CD4-positive, alpha-beta memory T cell (primary cell): ENCODE measurements at regions of chr11 and their contacts with region 1.

Region 1: DNA sequence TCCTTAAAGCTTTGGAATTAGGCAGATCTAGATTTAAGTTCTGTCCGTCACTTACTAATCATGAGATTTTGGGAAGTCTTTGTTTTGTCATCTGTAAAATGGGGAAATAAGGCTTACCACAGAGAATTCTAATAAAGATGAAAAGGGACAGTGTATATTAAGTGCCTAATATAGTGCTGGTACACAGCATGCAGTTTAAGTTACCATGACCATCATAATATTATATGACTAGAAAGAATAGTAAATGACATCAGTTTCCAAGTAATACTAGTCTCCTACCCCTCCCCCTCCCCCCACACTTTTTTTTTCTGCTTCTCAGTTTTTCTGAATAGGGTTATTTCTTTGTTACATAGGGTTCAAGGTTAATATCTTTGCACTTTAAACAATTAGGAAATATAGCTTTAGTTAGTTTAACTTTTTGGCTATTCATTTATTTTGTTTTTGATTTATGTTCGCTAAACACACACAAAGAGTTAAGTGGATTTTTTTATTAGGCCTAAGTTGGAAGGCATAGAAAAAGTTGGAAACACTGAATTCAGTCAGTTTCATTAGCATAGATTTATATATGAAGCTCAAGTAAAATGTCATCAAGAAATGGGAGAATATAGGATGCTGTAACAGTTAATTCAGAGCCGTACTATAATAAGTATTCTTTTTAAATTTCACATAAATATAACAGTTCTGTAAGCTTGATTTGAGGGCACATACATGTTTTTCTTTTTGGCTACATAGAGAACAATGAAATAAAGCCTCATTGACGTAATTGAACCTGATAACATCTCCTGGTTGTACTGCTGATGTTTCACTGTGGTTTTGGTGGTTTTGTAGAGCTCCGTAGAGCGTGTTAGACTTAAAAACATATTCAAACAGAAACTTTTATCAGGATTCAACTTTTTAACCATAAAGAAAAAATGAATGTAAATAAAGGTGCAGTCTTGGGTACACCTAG is 121.2 kb downstream of the PDE3B start:
- DNase-seq: peak; percentile 81 to 93 (median 90)
- H3K4me3 ChIP-seq: no peak overlapping the region
- H3K4me3 Mint-ChIP-seq: peak overlapping the region in 7 of 8 donors; percentile 44 to 81 (median 67)
- H3K27ac ChIP-seq: peak overlapping the region; percentile 53
- H3K27ac Mint-ChIP-seq: no peak overlapping the region
- H3K4me1 ChIP-seq: peaks cover 89% of the 10 kb centered on the region
- H3K4me1 Mint-ChIP-seq: peaks cover 18 to 40% (median 25%) of the 10 kb centered on the region in 4 donors
- H3K27me3 ChIP-seq: no peaks in the 10 kb centered on the region
- H3K27me3 Mint-ChIP-seq: no peaks in the 10 kb centered on the region

Region 2: GRCh38 chr11:14358729-14359439 is 406.0 kb before region 1 on chr11 and contains the start of gene RRAS2:
- CTCF ChIA-PET with region 1: no interaction called
- POLR2A ChIA-PET with region 1: no interaction called
- intact Hi-C with region 1: no loop called
- DNase-seq: peak; percentile 70 to 79 (median 78)
- H3K4me3 ChIP-seq: peak within 1 kb of the TSS; percentile 52 to 66
- H3K4me3 Mint-ChIP-seq: peak within 1 kb of the TSS; percentile 91 to 99 (median 97)
- H3K27ac ChIP-seq: peak within 1 kb of the TSS; percentile 44
- H3K27ac Mint-ChIP-seq: peak within 1 kb of the TSS; percentile 79 to 98 (median 91)
- H3K4me1 ChIP-seq: peaks cover 16% of the 10 kb centered on the region
- H3K4me1 Mint-ChIP-seq: peaks cover 24 to 37% (median 30%) of the 10 kb centered on the region in 4 donors
- H3K27me3 ChIP-seq: no peaks in the 10 kb centered on the region
- H3K27me3 Mint-ChIP-seq: no peaks in the 10 kb centered on the region
- total RNA-seq, gene RRAS2: 11.4 to 11.8 TPM

Region 3: DNA sequence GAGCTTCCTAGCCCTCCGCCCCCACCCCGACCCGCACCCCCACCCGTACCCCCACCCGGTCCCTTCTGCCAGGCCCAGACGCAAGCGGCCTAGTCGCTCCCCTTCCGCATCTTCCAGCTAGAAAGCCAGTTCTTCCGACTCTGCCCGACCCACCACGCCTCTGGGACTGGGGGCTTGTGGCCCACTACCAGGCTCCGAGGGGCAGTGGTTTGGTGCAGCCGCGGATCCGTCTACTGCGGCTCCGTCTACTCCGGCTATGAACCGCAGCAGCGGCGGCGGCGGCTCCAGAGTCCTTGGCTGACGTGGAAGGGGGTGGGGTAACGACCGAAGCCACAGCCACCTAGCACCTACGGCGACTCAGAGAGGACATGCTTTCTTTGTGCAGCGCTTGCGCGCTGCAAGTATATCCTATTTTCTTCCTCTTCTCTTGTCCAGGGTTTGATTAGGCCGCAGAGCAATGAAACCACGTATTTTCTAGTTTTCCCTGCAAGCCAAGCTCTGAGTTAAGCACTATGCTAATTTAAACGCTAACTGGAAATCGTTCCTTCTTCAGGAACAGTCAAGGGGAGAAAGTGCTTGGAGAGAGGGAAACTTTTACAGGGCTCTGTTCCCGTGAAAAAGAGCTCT is 265.2 kb before region 1 on chr11 and contains the start of gene COPB1:
- CTCF ChIA-PET with region 1: no interaction called
- POLR2A ChIA-PET with region 1: interaction called, 5 read pairs
- intact Hi-C with region 1: loop called (anchors 1 kb)
- DNase-seq: peak; percentile 91 to 95 (median 92)
- H3K4me3 ChIP-seq: peak within 1 kb of the TSS; percentile 76 to 89
- H3K4me3 Mint-ChIP-seq: peak within 1 kb of the TSS; percentile 92 to 100 (median 94)
- H3K27ac ChIP-seq: peak within 1 kb of the TSS; percentile 65
- H3K27ac Mint-ChIP-seq: peak within 1 kb of the TSS; percentile 82 to 100 (median 98)
- H3K4me1 ChIP-seq: peaks cover 49% of the 10 kb centered on the region
- H3K4me1 Mint-ChIP-seq: peaks cover 28 to 57% (median 35%) of the 10 kb centered on the region in 4 donors
- H3K27me3 ChIP-seq: no peaks in the 10 kb centered on the region
- H3K27me3 Mint-ChIP-seq: no peaks in the 10 kb centered on the region
- total RNA-seq, gene COPB1: 79.8 to 82.1 TPM

Region 4: GRCh38 chr11:14537134-14537599 is 227.7 kb before region 1 on chr11:
- CTCF ChIA-PET with region 1: interaction called, 5 read pairs
- POLR2A ChIA-PET with region 1: interaction called, 3 read pairs
- intact Hi-C with region 1: loop called (anchors 2 kb)
- DNase-seq: peak; percentile 49 to 69 (median 65)
- H3K4me3 ChIP-seq: peak overlapping the region in 1 of 2 donors; percentile 23
- H3K4me3 Mint-ChIP-seq: peak overlapping the region; percentile 69 to 90 (median 82)
- H3K27ac ChIP-seq: peak overlapping the region; percentile 48
- H3K27ac Mint-ChIP-seq: peak overlapping the region; percentile 77 to 97 (median 92)
- H3K4me1 ChIP-seq: peaks cover 5% of the 10 kb centered on the region
- H3K4me1 Mint-ChIP-seq: peaks cover 3 to 14% (median 4%) of the 10 kb centered on the region in 4 donors
- H3K27me3 ChIP-seq: no peaks in the 10 kb centered on the region
- H3K27me3 Mint-ChIP-seq: no peaks in the 10 kb centered on the region

Region 5: GRCh38 chr11:14727215-14727614 is 37.6 kb before region 1 on chr11:
- CTCF ChIA-PET with region 1: interaction called, 3 read pairs
- POLR2A ChIA-PET with region 1: no interaction called
- intact Hi-C with region 1: loop called (anchors 2 kb)
- DNase-seq: no peak
- H3K4me3 ChIP-seq: no peak overlapping the region
- H3K4me3 Mint-ChIP-seq: peak overlapping the region in 2 of 8 donors; percentile 3 to 51
- H3K27ac ChIP-seq: no peak overlapping the region
- H3K27ac Mint-ChIP-seq: no peak overlapping the region
- H3K4me1 ChIP-seq: peaks cover 30% of the 10 kb centered on the region
- H3K4me1 Mint-ChIP-seq: peaks cover 43 to 68% (median 47%) of the 10 kb centered on the region in 4 donors
- H3K27me3 ChIP-seq: no peaks in the 10 kb centered on the region
- H3K27me3 Mint-ChIP-seq: no peaks in the 10 kb centered on the region

Region 6: GRCh38 chr11:14835491-14836105 is 70.7 kb after region 1 on chr11:
- CTCF ChIA-PET with region 1: no interaction called
- POLR2A ChIA-PET with region 1: no interaction called
- intact Hi-C with region 1: no loop called
- DNase-seq: no peak
- H3K4me3 ChIP-seq: no peak overlapping the region
- H3K4me3 Mint-ChIP-seq: no peak overlapping the region
- H3K27ac ChIP-seq: no peak overlapping the region
- H3K27ac Mint-ChIP-seq: no peak overlapping the region
- H3K4me1 ChIP-seq: no peaks in the 10 kb centered on the region
- H3K4me1 Mint-ChIP-seq: peaks cover 0 to 4% (median 0%) of the 10 kb centered on the region in 4 donors
- H3K27me3 ChIP-seq: no peaks in the 10 kb centered on the region
- H3K27me3 Mint-ChIP-seq: no peaks in the 10 kb centered on the region

Region 7: GRCh38 chr11:14892036-14892567 is 127.2 kb after region 1 on chr11 and contains the start of gene CYP2R1:
- CTCF ChIA-PET with region 1: interaction called, 3 read pairs
- POLR2A ChIA-PET with region 1: interaction called, 18 read pairs
- intact Hi-C with region 1: loop called (anchors 1 kb)
- DNase-seq: peak; percentile 88 to 92 (median 91)
- H3K4me3 ChIP-seq: peak within 1 kb of the TSS; percentile 91 to 96
- H3K4me3 Mint-ChIP-seq: peak within 1 kb of the TSS; percentile 90 to 99 (median 94)
- H3K27ac ChIP-seq: peak within 1 kb of the TSS; percentile 80
- H3K27ac Mint-ChIP-seq: peak within 1 kb of the TSS; percentile 94 to 99 (median 96)
- H3K4me1 ChIP-seq: peaks cover 36% of the 10 kb centered on the region
- H3K4me1 Mint-ChIP-seq: peaks cover 17 to 48% (median 34%) of the 10 kb centered on the region in 4 donors
- H3K27me3 ChIP-seq: no peaks in the 10 kb centered on the region
- H3K27me3 Mint-ChIP-seq: no peaks in the 10 kb centered on the region
- total RNA-seq, gene CYP2R1: 12.1 to 14.7 TPM